A549 (cell line): ENCODE measurements at regions of chr10 and their contacts with region 1.

Region 1: DNA sequence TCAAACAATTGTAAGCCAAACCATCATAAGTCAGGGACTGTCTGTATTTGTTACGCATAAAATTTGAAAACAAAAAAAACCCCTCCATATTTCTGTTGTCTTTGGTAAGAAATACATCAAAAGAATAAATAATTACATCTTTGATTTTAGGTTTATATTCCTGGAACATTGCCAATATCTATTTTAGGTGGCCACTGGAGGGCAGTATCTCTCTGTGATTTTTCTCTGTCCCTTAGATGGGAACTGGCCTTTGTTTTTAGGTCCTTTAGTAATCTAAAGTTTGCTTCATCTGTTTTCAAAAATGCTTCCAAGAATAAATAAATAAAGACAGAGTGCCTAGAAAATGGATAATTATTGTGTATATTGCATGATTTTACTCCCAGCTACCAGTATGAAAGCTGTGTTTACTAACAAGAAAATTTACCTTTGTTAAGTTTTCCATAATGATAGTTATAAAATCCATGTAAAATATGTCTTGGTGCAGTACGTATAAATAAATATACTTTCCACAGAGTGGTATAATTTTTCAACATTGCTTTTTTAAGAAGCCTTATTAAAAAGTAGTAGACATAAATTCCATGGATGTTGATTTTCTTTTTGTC is 64.2 kb downstream of the PHYHIPL start:
- DNase-seq: peak in 1 of 2 experiments; percentile 44
- ATAC-seq: no peak
- H3K4me3 ChIP-seq: no peak overlapping the region
- H3K27ac ChIP-seq: no peak overlapping the region
- H3K4me1 ChIP-seq: no peaks in the 10 kb centered on the region
- CTCF ChIP-seq: peak; percentile 83
- EP300 ChIP-seq: no peak
- POLR2A ChIP-seq: no peak
- RAD21 ChIP-seq: peak; percentile 72 to 76

Region 2: GRCh38 chr10:59006511-59007306 is 234.0 kb before region 1 on chr10:
- CTCF ChIA-PET with region 1: no interaction called
- POLR2A ChIA-PET with region 1: no interaction called
- DNase-seq: peak; percentile 63 to 64
- ATAC-seq: peak; percentile 55 to 65; a peak in 4 of 6 replicates
- H3K4me3 ChIP-seq: no peak overlapping the region
- H3K27ac ChIP-seq: peak overlapping the region; percentile 51 to 68; a peak in 5 of 6 replicates
- H3K4me1 ChIP-seq: peaks cover 46% of the 10 kb centered on the region
- CTCF ChIP-seq: no peak
- EP300 ChIP-seq: no peak
- POLR2A ChIP-seq: no peak
- RAD21 ChIP-seq: no peak

Region 3: DNA sequence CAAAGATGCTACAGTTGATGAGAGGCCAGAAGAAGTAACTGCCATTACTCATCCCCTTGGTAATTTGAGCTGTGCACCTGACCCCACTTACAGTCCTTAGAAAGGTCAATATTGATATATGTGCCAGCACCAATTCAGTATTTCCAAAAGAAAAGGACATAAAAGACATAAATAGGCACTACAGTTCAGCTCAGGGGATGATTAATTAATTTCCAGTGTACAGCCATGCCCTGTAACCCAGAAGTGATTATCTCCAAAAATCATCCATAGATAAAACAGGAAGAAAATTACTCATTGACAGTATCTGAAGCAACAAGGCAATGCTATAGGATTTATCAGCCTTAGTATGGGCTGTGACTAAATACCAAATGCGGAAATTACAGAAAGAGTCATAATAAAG is 18.2 kb after region 1 on chr10:
- CTCF ChIA-PET with region 1: no interaction called
- POLR2A ChIA-PET with region 1: no interaction called
- DNase-seq: no peak
- ATAC-seq: no peak
- H3K4me3 ChIP-seq: no peak overlapping the region
- H3K27ac ChIP-seq: no peak overlapping the region
- H3K4me1 ChIP-seq: no peaks in the 10 kb centered on the region
- CTCF ChIP-seq: no peak
- EP300 ChIP-seq: no peak
- POLR2A ChIP-seq: no peak
- RAD21 ChIP-seq: no peak

Region 4: GRCh38 chr10:59372543-59372942 is 131.9 kb after region 1 on chr10:
- CTCF ChIA-PET with region 1: no interaction called
- POLR2A ChIA-PET with region 1: no interaction called
- DNase-seq: no peak
- ATAC-seq: no peak
- H3K4me3 ChIP-seq: no peak overlapping the region
- H3K27ac ChIP-seq: no peak overlapping the region
- H3K4me1 ChIP-seq: no peaks in the 10 kb centered on the region
- CTCF ChIP-seq: no peak
- EP300 ChIP-seq: no peak
- POLR2A ChIP-seq: no peak
- RAD21 ChIP-seq: no peak

Region 5: GRCh38 chr10:59465088-59465487 is 224.4 kb after region 1 on chr10:
- CTCF ChIA-PET with region 1: no interaction called
- POLR2A ChIA-PET with region 1: no interaction called
- DNase-seq: peak in 1 of 2 experiments; percentile 2
- ATAC-seq: no peak
- H3K4me3 ChIP-seq: no peak overlapping the region
- H3K27ac ChIP-seq: no peak overlapping the region
- H3K4me1 ChIP-seq: no peaks in the 10 kb centered on the region
- CTCF ChIP-seq: peak; percentile 16; the same call in 2 of the 3 replicates
- EP300 ChIP-seq: no peak
- POLR2A ChIP-seq: no peak
- RAD21 ChIP-seq: peak in 1 of 2 experiments; percentile 23; a peak in 1 of 5 replicates

Region 6: GRCh38 chr10:59580026-59580863 is 339.6 kb after region 1 on chr10:
- CTCF ChIA-PET with region 1: interaction called, 12 read pairs
- POLR2A ChIA-PET with region 1: no interaction called
- DNase-seq: peak; percentile 15 to 39
- ATAC-seq: no peak
- H3K4me3 ChIP-seq: no peak overlapping the region
- H3K27ac ChIP-seq: no peak overlapping the region
- H3K4me1 ChIP-seq: no peaks in the 10 kb centered on the region
- CTCF ChIP-seq: peak; percentile 57
- EP300 ChIP-seq: no peak
- POLR2A ChIP-seq: no peak
- RAD21 ChIP-seq: peak; percentile 58 to 65